ENCODE measurements at regions of chr6 and their contacts with region 1.

Region 1: GRCh38 chr6:24581084-24581669 is 64.8 kb downstream of the KIAA0319 start:
- DNase-seq: peak; percentile 86
- ATAC-seq: peak; percentile 88
- H3K4me3 Mint-ChIP-seq: no peak overlapping the region
- H3K27ac Mint-ChIP-seq: no peak overlapping the region
- H3K4me1 Mint-ChIP-seq: peaks cover 6% of the 10 kb centered on the region
- H3K27me3 Mint-ChIP-seq: peaks cover 16% of the 10 kb centered on the region

Region 2: GRCh38 chr6:24504602-24505586 is 76.3 kb before region 1 on chr6:
- CTCF ChIA-PET with region 1: no interaction called
- POLR2A ChIA-PET with region 1: no interaction called
- DNase-seq: no peak
- ATAC-seq: no peak
- H3K4me3 Mint-ChIP-seq: no peak overlapping the region
- H3K27ac Mint-ChIP-seq: no peak overlapping the region
- H3K4me1 Mint-ChIP-seq: no peaks in the 10 kb centered on the region
- H3K27me3 Mint-ChIP-seq: no peaks in the 10 kb centered on the region

Region 3: DNA sequence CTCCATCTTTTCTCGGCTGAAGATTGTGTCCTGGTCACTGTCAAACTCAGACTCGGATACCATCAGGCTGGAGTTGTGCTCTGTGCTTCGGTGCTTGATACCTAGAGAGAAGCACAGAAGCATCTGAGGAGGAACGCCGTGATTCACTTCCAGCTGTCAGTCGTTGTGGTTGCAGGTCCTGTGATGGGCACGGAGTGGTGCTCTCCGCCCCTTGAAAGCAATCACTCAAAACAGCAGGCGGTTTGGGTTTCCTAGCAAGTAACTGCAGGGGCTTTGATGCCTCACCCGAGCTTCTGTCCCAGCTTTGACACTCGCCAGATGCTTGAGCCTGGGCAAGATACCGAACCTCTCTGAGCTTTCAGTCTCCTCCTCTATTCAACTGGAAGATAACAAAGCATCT is 33.9 kb before region 1 on chr6:
- CTCF ChIA-PET with region 1: interaction called, 23 read pairs
- POLR2A ChIA-PET with region 1: no interaction called
- DNase-seq: peak; percentile 69
- ATAC-seq: peak; percentile 90
- H3K4me3 Mint-ChIP-seq: no peak overlapping the region
- H3K27ac Mint-ChIP-seq: no peak overlapping the region
- H3K4me1 Mint-ChIP-seq: peaks cover 9% of the 10 kb centered on the region
- H3K27me3 Mint-ChIP-seq: peaks cover 23% of the 10 kb centered on the region

Region 4: DNA sequence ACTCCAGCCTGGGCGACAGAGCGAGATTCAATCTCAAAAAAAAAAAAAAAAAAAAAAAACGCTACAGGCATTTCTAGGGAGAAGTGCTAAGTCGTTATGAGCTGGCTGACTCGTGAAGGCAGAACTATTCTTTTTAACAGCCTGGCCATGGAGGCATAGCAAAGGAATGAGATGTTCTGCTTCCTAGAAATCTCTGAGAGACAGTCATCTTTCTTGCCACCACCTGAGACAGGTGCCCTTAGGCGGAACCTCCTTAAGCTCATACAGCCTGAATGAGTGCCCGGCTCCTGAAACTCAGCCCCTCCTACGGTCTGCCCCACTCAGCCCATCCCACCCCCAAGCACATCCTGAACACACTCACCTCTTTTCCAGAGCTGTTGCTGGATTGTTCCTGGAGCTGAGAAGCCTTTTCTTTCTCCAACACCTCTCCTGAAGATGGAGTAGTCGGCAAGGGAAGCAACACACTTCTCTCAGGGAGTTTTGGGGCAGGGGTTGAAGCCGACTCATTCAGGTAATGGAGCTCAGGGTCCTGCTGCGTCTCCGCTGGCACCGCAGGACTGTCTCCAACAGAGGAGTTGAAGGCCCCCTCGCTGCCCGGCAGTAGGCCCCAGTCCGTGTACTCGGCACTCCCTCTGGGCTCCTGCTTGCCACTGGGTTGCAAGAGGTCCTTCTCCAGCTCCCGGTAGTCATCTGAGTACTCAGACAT is 14.5 kb after region 1 on chr6:
- CTCF ChIA-PET with region 1: interaction called, 11 read pairs
- POLR2A ChIA-PET with region 1: no interaction called
- DNase-seq: no peak
- ATAC-seq: no peak
- H3K4me3 Mint-ChIP-seq: no peak overlapping the region
- H3K27ac Mint-ChIP-seq: no peak overlapping the region
- H3K4me1 Mint-ChIP-seq: no peaks in the 10 kb centered on the region
- H3K27me3 Mint-ChIP-seq: peaks cover 12% of the 10 kb centered on the region

Region 5: DNA sequence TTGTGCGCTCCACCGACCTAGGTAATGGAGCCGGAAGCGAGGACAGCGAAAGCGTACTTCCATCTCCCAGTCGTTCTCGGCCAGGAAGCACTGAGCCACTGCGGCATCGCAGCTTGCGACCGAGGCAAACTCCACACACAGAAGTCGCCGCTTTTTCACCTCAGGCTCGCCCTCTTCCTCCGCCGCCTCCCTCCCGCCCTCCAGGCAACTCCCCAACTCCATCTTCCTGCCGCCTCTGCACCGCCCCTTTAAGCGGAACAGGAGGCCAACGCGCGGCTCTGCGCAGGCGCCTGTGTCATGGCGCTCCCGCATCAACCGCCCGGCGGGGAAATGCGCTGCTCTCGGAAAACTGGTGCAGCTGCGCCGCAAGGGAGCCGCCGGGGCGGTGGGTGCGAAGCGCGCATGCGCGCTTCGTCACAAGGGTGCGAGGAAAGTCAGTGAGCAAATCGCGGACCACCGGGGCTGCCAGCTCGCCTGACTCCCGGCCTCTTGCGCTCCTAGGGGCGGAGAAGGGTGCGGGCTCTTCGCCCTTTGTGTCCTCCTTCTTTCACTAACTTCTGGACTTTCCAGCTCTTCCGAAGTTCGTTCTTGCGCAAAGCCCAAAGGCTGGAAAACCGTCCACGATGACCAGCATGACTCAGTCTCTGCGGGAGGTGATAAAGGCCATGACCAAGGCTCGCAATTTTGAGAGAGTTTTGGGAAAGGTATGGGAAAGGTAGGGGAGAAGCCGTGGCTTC is 85.6 kb after region 1 on chr6 and contains the starts of genes ACOT13 and TDP2:
- CTCF ChIA-PET with region 1: interaction called, 25 read pairs
- POLR2A ChIA-PET with region 1: interaction called, 5 read pairs
- DNase-seq: peak; percentile 97
- ATAC-seq: peak; percentile 96
- H3K4me3 Mint-ChIP-seq: peak within 1 kb of the TSS; percentile 98
- H3K27ac Mint-ChIP-seq: peak within 1 kb of the TSS; percentile 100
- H3K4me1 Mint-ChIP-seq: peaks cover 45% of the 10 kb centered on the region
- H3K27me3 Mint-ChIP-seq: no peaks in the 10 kb centered on the region
- total RNA-seq, gene ACOT13: 21.3 to 22.6 TPM
- total RNA-seq, gene TDP2: 43.0 to 44.0 TPM

Region 6: DNA sequence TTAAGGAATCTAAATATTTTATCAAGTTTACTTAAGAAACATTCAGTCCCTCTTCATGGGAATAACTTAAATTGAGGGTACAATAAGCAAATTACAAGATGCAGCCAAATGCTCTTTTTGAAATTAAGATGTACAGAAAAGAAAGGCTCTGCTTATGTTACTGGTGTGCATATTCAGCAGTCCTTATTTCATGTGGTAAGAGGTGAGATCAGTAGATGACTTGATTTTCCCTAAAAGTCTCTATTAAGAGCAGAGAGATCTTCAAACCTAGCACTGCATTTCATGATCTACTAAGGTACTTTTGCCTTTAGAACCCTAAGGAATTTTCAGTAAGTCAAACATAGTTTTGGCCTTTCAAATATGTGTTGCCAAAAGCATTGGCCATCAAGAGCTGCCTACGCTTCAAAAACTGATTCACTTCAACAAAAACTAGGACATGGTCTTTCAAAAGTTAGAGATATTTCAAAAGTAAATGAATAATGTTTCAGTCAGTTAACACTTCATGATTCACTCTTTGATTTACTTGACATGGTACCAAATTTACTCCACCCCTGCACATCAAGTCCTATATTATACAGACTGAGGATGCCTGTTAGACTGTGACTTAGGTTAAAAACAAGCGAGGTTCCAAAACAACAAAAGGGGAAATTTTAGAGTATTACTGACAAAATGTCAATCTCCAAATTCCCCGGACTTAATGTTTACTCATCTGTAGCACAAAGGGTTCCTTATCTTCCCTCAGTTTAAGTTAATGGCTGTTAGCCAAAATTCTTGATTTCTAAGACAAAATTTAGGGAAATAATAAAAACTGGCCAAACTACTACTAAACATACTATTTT is 118.6 kb after region 1 on chr6:
- CTCF ChIA-PET with region 1: interaction called, 27 read pairs
- POLR2A ChIA-PET with region 1: interaction called, 3 read pairs
- DNase-seq: no peak
- ATAC-seq: no peak
- H3K4me3 Mint-ChIP-seq: no peak overlapping the region
- H3K27ac Mint-ChIP-seq: no peak overlapping the region
- H3K4me1 Mint-ChIP-seq: peaks cover 13% of the 10 kb centered on the region
- H3K27me3 Mint-ChIP-seq: no peaks in the 10 kb centered on the region

Measured in activated CD8-positive, alpha-beta T cell treated with anti-CD3 and anti-CD28 coated beads, Interleukin-2, amount 10 ng/mL, durations not matched to agents 7 days and 5 days (primary cell).